Prostate gland (tissue), 2 donors: ENCODE measurements at regions of chr19 and their contacts with region 1.

Region 1: DNA sequence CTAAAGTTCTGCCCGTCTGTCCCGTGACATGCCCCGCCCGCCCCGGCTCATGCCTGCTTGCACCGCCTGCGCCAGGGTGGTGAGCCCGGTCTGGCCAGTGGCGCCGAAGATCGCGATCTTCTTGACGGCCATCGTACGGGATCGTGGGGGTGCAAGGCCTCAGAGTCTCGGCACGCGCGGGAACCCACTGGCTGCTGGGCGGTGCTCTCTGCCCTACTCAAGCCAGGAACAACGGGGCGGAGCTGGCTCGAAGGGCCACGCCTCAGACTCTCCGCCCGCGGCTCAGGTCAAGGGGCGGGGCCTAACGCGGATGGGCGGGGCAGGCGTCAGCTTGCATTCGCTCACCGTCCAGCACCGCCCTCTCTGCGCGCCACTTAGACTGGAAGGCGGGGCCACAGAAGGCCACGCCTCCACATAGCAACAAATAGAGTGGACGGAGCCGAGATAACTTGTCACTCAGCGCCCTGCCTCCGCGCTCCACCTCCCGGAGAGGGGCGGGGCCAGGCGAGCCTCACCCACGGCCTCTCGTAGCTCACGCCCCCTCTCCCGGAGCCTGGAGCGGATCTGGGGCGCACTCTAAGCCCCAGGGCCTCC is at the start of gene BLVRB:
- DNase-seq: peak; percentile 100
- H3K4me3 ChIP-seq: peak within 1 kb of the TSS; percentile 69 to 71
- H3K27ac ChIP-seq: peak within 1 kb of the TSS; percentile 96 to 97
- H3K4me1 ChIP-seq: peaks cover 11% of the 10 kb centered on the region
- H3K27me3 ChIP-seq: no peaks in the 10 kb centered on the region
- CTCF ChIP-seq: peak in 1 of 4 experiments; percentile 6
- POLR2A ChIP-seq: peak; percentile 98
- total RNA-seq, gene BLVRB: 101 to 261 TPM

Region 2: GRCh38 chr19:40425450-40426287 is 40.0 kb before region 1 on chr19 and contains the start of gene SERTAD1:
- intact Hi-C with region 1: loop called (anchors 2 kb)
- DNase-seq: peak; percentile 100
- H3K4me3 ChIP-seq: peak within 1 kb of the TSS; percentile 95 to 98
- H3K27ac ChIP-seq: peak within 1 kb of the TSS; percentile 100
- H3K4me1 ChIP-seq: peaks cover 4% of the 10 kb centered on the region
- H3K27me3 ChIP-seq: no peaks in the 10 kb centered on the region
- CTCF ChIP-seq: peak; percentile 67 to 92 (median 88)
- POLR2A ChIP-seq: peak; percentile 100
- total RNA-seq, gene SERTAD1: 15.9 to 19.5 TPM

Region 3: DNA sequence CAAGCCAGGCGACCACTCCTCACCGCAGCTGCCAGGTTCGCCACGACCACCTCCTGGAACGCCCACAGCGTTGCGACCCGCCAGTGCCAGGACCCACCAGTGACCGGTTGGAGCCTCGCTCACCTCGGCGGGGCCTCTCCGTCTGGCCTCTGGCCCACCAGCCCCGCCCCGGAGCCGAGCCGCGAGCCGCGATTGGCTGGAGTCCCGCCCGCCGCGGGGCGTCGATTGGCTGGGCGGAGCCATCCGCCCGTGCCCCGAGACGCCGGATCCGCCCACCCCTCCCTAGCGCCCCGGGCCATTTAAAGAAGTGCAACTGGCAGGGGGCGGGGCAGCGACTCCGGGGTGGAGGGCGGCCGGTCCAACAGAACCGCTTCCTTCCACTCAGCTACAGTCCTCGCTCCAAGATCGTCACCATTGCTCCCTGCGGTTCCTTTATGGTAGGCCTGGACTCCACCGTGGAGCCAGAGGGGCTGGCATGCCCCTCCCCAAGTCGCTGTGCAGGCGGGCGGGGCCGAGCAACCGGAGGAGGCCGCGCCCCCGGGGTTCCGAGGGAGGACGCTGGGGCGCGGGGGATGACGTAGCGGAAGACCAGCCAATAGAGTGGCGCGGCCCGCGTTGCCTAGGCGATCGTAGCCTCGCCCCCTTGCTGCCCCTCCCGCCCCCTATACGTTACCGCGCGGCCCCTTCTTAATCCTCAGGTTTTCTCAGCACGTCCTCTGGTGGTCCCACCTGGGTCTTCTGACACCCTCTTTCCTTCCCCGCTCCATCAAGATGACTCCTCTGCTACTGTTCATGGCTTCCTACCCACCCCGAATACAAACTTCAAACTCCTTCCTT is 21.2 kb before region 1 on chr19 and contains the start of gene SERTAD3:
- intact Hi-C with region 1: loop called (anchors 2 kb)
- DNase-seq: peak; percentile 97
- H3K4me3 ChIP-seq: peak within 1 kb of the TSS; percentile 85 to 97
- H3K27ac ChIP-seq: peak within 1 kb of the TSS; percentile 99
- H3K4me1 ChIP-seq: peaks cover 19% of the 10 kb centered on the region
- H3K27me3 ChIP-seq: no peaks in the 10 kb centered on the region
- CTCF ChIP-seq: peak in 2 of 4 experiments; percentile 27 to 29
- POLR2A ChIP-seq: peak; percentile 99
- total RNA-seq, gene SERTAD3: 22.7 to 37.3 TPM

Region 4: GRCh38 chr19:40529093-40529954 is 63.7 kb after region 1 on chr19:
- intact Hi-C with region 1: loop called (anchors 10 kb)
- DNase-seq: peak; percentile 82
- H3K4me3 ChIP-seq: peak overlapping the region; percentile 33 to 35
- H3K27ac ChIP-seq: peak overlapping the region in 1 of 2 donors; percentile 65
- H3K4me1 ChIP-seq: no peaks in the 10 kb centered on the region
- H3K27me3 ChIP-seq: no peaks in the 10 kb centered on the region
- CTCF ChIP-seq: peak; percentile 78 to 98 (median 96)
- POLR2A ChIP-seq: peak; percentile 17

Region 5: GRCh38 chr19:40576585-40577451 is 111.2 kb after region 1 on chr19 and contains the start of gene SHKBP1:
- intact Hi-C with region 1: loop called (anchors 5 kb)
- DNase-seq: peak; percentile 92
- H3K4me3 ChIP-seq: peak within 1 kb of the TSS; percentile 57 to 78
- H3K27ac ChIP-seq: peak within 1 kb of the TSS; percentile 69 to 82
- H3K4me1 ChIP-seq: no peaks in the 10 kb centered on the region
- H3K27me3 ChIP-seq: no peaks in the 10 kb centered on the region
- CTCF ChIP-seq: peak in 1 of 4 experiments; percentile 3
- POLR2A ChIP-seq: peak; percentile 46
- total RNA-seq, gene SHKBP1: 54.6 to 91.6 TPM

Region 6: GRCh38 chr19:40603389-40604135 is 137.9 kb after region 1 on chr19:
- intact Hi-C with region 1: loop called (anchors 10 kb)
- DNase-seq: peak; percentile 98
- H3K4me3 ChIP-seq: peak overlapping the region; percentile 20 to 30
- H3K27ac ChIP-seq: peak overlapping the region; percentile 81 to 87
- H3K4me1 ChIP-seq: peaks cover 23% of the 10 kb centered on the region
- H3K27me3 ChIP-seq: no peaks in the 10 kb centered on the region
- CTCF ChIP-seq: peak in 1 of 4 experiments; percentile 12
- POLR2A ChIP-seq: peak; percentile 81

Region 7: GRCh38 chr19:40633207-40633606 is 167.6 kb after region 1 on chr19:
- intact Hi-C with region 1: loop called (anchors 10 kb)
- DNase-seq: no peak
- H3K4me3 ChIP-seq: no peak overlapping the region
- H3K27ac ChIP-seq: no peak overlapping the region
- H3K4me1 ChIP-seq: peaks cover 3% of the 10 kb centered on the region
- H3K27me3 ChIP-seq: no peaks in the 10 kb centered on the region
- CTCF ChIP-seq: no peak
- POLR2A ChIP-seq: no peak